Naive thymus-derived CD4-positive, alpha-beta T cell (primary cell): ENCODE measurements at regions of chr1 and their contacts with region 1.

Region 1: GRCh38 chr1:116881879-116882520 is 27.7 kb upstream of the PTGFRN start:
- DNase-seq: peak in 3 of 9 donors; percentile 14 to 40 (median 19)
- ATAC-seq: no peak
- H3K4me3 ChIP-seq: no peak overlapping the region
- H3K4me3 Mint-ChIP-seq: no peak overlapping the region
- H3K27ac ChIP-seq: no peak overlapping the region
- H3K27ac Mint-ChIP-seq: peak overlapping the region in 2 of 9 donors; percentile 44 to 60
- H3K4me1 ChIP-seq: peaks cover 11 to 20% of the 10 kb centered on the region in 2 donors
- H3K4me1 Mint-ChIP-seq: peaks cover 0 to 26% (median 0%) of the 10 kb centered on the region in 7 donors
- H3K27me3 ChIP-seq: no peaks in the 10 kb centered on the region
- H3K27me3 Mint-ChIP-seq: no peaks in the 10 kb centered on the region

Region 2: DNA sequence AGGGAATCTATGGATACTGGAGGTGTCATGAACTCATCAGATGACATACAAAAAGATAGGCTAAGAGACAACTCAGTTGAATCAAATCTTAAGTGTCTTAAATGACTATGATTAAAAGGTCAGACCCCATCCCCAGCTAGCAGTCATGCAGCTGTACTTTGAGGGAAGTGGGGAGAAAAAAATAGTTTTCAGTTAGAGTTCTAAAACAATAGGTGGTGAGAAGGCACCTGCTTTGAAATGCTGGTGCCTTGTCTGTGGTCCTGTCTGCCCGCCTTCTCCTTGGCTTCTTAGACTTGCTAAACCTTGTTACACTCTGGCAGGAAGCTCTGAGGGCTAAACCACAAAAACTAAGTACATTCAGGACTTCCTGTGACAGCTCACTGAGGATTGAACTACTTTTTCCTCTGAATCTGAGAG is 112.4 kb before region 1 on chr1:
- CTCF ChIA-PET with region 1: interaction called, 5 read pairs
- POLR2A ChIA-PET with region 1: interaction called, 10 read pairs
- intact Hi-C with region 1: loop called (anchors 1 to 2 kb)
- DNase-seq: peak in 8 of 9 donors; percentile 60 to 92 (median 86)
- ATAC-seq: peak; percentile 91
- H3K4me3 ChIP-seq: peak overlapping the region; percentile 24
- H3K4me3 Mint-ChIP-seq: peak overlapping the region; percentile 51 to 99 (median 78)
- H3K27ac ChIP-seq: peak overlapping the region; percentile 89
- H3K27ac Mint-ChIP-seq: peak overlapping the region; percentile 84 to 100 (median 97)
- H3K4me1 ChIP-seq: peaks cover 80 to 81% of the 10 kb centered on the region in 2 donors
- H3K4me1 Mint-ChIP-seq: peaks cover 64 to 97% (median 91%) of the 10 kb centered on the region in 7 donors
- H3K27me3 ChIP-seq: no peaks in the 10 kb centered on the region
- H3K27me3 Mint-ChIP-seq: no peaks in the 10 kb centered on the region

Region 3: DNA sequence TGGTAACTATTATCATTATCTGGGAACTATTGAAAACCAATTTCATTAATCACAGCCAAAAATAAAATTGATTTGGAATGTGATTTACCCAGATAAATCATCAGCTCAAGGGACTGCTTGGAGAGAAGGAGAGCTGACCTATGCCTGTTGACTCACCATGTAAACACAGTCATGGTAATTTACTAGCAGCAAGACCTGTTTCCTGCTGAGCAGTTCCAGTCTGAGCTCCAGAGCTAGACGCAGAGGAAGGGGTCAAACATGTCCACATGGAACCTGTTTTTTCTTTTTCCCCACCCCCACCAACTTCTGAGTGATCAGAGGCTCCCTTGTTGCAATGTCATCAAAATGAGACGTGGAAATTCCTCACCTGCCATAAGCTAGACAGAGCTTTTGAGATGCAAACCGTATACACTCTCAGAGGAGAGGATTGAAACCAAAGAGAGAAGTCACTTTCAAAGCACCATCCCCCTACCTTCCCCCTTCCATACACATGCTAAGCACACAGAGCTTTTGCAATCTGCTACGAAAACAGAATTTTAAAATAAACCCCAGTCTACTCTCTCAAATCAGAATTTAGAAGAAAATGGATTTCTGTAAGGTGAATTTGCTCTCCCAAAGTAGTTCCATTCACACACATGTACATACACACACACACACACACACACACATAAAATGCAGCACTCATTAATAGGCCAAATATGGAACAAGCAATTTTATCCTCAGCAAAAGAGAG is 28.2 kb before region 1 on chr1:
- CTCF ChIA-PET with region 1: interaction called, 4 read pairs
- POLR2A ChIA-PET with region 1: no interaction called
- intact Hi-C with region 1: loop called (anchors 2 kb)
- DNase-seq: no peak
- ATAC-seq: peak; percentile 48
- H3K4me3 ChIP-seq: no peak overlapping the region
- H3K4me3 Mint-ChIP-seq: no peak overlapping the region
- H3K27ac ChIP-seq: no peak overlapping the region
- H3K27ac Mint-ChIP-seq: peak overlapping the region in 4 of 9 donors; percentile 43 to 87 (median 70)
- H3K4me1 ChIP-seq: peaks cover 0 to 5% of the 10 kb centered on the region in 2 donors
- H3K4me1 Mint-ChIP-seq: peaks cover 13 to 27% (median 17%) of the 10 kb centered on the region in 7 donors
- H3K27me3 ChIP-seq: no peaks in the 10 kb centered on the region
- H3K27me3 Mint-ChIP-seq: no peaks in the 10 kb centered on the region

Region 4: GRCh38 chr1:116934586-116935207 is 52.7 kb after region 1 on chr1:
- CTCF ChIA-PET with region 1: interaction called, 4 read pairs
- POLR2A ChIA-PET with region 1: interaction called, 3 read pairs
- intact Hi-C with region 1: loop called (anchors 1 to 2 kb)
- DNase-seq: peak in 5 of 9 donors; percentile 34 to 46 (median 39)
- ATAC-seq: peak; percentile 58
- H3K4me3 ChIP-seq: no peak overlapping the region
- H3K4me3 Mint-ChIP-seq: peak overlapping the region in 4 of 10 donors; percentile 4 to 40 (median 19)
- H3K27ac ChIP-seq: no peak overlapping the region
- H3K27ac Mint-ChIP-seq: peak overlapping the region in 8 of 9 donors; percentile 21 to 82 (median 52)
- H3K4me1 ChIP-seq: peaks cover 20 to 22% of the 10 kb centered on the region in 2 donors
- H3K4me1 Mint-ChIP-seq: peaks cover 14 to 28% (median 24%) of the 10 kb centered on the region in 7 donors
- H3K27me3 ChIP-seq: no peaks in the 10 kb centered on the region
- H3K27me3 Mint-ChIP-seq: no peaks in the 10 kb centered on the region

Region 5: GRCh38 chr1:117051224-117052064 is 169.4 kb after region 1 on chr1:
- CTCF ChIA-PET with region 1: interaction called, 3 read pairs
- POLR2A ChIA-PET with region 1: interaction called, 3 read pairs
- intact Hi-C with region 1: loop called (anchors 1 to 2 kb)
- DNase-seq: peak in 6 of 9 donors; percentile 13 to 34 (median 28)
- ATAC-seq: peak; percentile 34
- H3K4me3 ChIP-seq: peak overlapping the region; percentile 26
- H3K4me3 Mint-ChIP-seq: peak overlapping the region; percentile 49 to 94 (median 84)
- H3K27ac ChIP-seq: peak overlapping the region; percentile 54
- H3K27ac Mint-ChIP-seq: peak overlapping the region; percentile 87 to 99 (median 95)
- H3K4me1 ChIP-seq: peaks cover 6 to 45% of the 10 kb centered on the region in 2 donors
- H3K4me1 Mint-ChIP-seq: peaks cover 30 to 66% (median 58%) of the 10 kb centered on the region in 7 donors
- H3K27me3 ChIP-seq: no peaks in the 10 kb centered on the region
- H3K27me3 Mint-ChIP-seq: no peaks in the 10 kb centered on the region